A549 (cell line): ENCODE measurements at regions of chr1 and their contacts with region 1.

Region 1: DNA sequence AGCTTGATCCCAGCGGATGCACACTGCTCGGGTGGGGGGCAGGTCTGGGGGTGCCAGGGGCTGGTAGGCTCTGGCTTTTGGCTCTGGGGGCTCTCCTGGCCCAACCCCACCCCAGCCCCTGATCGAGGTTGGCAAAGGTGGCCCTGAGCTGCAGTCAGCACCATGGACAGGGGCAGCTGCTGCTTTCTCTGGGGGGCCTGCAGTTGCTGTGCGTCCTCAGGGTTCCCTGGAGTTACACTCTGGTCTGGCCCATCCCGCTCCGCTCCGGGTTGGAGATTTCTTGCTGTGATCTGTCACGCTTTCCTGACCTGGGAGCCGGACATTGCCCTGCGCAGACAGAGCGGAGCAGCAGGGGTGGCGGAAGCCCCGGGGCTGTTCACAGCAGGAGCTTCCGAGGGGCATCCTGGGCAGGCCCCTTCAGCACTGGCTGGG is 8.0 kb upstream of the PLCH2 start:
- DNase-seq: no peak
- ATAC-seq: peak in 1 of 2 experiments; percentile 40; a peak in 3 of 6 replicates
- H3K4me3 ChIP-seq: no peak overlapping the region
- H3K27ac ChIP-seq: no peak overlapping the region
- H3K4me1 ChIP-seq: peaks cover 8% of the 10 kb centered on the region; the same call in 2 of the 3 replicates
- CTCF ChIP-seq: no peak
- EP300 ChIP-seq: no peak
- POLR2A ChIP-seq: no peak
- RAD21 ChIP-seq: no peak

Region 2: DNA sequence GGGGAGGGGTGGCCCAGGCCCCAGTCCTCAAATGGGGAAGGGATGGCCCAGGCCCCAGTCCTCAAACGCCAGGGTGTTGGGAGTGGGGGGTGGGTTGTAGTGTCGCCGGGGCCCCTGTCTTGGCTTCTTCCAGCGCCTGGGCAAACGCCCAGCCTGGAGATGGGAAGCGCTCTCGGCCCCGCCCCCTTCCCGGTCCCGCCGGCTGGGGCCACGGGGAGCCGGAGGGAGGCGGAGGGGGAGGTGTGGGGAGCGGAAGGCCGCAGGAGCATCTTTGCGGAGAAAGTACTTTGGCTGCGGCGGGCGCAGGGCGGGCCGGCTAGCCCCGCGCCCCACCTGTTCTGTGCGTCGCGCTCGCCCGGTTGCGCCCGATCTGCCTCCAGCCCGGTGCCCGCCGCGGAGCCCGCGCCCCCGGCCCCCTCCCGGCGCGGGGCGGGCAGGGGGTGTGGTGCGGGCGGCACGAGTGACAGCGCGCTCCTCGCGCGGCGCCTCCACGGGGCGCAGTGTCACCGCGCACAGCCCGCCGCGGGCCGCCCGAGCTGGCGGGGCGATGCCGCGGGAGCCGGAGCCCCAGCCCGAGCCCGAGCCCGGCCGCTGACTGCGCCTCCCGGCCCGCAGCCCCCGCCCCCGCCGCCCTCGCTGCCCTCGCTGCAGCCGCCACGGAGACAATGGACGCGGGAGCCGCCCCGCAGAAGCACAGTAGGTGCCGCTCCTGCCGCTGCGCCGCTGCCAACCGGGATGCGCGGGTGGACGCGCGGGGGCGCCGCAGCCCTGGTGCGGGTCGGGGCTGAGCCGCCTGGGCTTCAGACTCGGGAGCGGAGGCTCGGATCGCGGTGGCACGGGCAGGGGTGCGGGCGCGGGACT is 24.6 kb before region 1 on chr1:
- CTCF ChIA-PET with region 1: interaction called, 27 read pairs
- POLR2A ChIA-PET with region 1: no interaction called
- DNase-seq: no peak
- ATAC-seq: peak in 1 of 2 experiments; percentile 43; a peak in 3 of 6 replicates
- H3K4me3 ChIP-seq: peak overlapping the region; percentile 44
- H3K27ac ChIP-seq: peak overlapping the region in 1 of 2 experiments; percentile 51; a peak in 3 of 6 replicates
- H3K4me1 ChIP-seq: peaks cover 27% of the 10 kb centered on the region
- CTCF ChIP-seq: peak; percentile 44
- EP300 ChIP-seq: no peak
- POLR2A ChIP-seq: no peak
- RAD21 ChIP-seq: peak; percentile 47 to 66

Region 3: GRCh38 chr1:2817784-2818564 is 349.9 kb after region 1 on chr1:
- CTCF ChIA-PET with region 1: no interaction called
- POLR2A ChIA-PET with region 1: no interaction called
- DNase-seq: no peak
- ATAC-seq: no peak
- H3K4me3 ChIP-seq: no peak overlapping the region
- H3K27ac ChIP-seq: no peak overlapping the region
- H3K4me1 ChIP-seq: no peaks in the 10 kb centered on the region
- CTCF ChIP-seq: no peak
- EP300 ChIP-seq: no peak
- POLR2A ChIP-seq: no peak
- RAD21 ChIP-seq: no peak